ENCODE measurements at regions of chr19 and their contacts with region 1.

Region 1: DNA sequence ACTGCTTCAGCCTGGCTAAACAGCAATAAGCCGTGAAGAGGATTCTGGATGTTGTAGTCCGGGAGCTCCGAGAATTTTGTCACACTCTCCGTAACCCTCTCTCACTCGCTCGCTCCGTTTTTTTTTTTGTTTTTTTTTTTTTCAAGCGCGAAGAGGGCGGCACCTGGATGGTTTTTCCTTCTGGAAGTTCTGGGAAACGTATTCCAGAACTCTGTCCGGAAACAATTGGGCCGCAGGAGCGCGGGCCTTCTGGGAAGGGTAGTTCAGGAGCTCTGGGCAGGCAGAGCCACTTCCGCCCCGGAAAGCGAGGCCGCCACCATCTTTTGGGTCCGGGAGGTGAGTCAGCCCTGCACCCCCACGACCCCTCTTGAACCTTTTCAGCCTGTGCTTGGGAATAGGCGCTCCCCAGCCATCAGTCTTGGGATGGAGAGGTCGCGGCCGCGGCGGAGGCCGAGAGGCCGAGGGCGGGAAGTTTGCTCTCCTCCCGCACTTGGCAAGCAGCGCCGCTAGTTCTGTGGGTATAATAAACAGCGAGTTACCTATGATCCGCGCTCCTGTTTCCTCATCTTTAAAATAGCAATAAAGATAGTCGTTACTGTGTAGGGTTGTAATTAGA is at the start of gene ZNF227:
- DNase-seq: peak; percentile 64 to 75 (median 72)
- H3K4me3 ChIP-seq: peak within 1 kb of the TSS; percentile 86 to 96 (median 90)
- H3K4me3 Mint-ChIP-seq: peak within 1 kb of the TSS; percentile 94 to 95
- H3K27ac ChIP-seq: peak within 1 kb of the TSS; percentile 32 to 80
- H3K27ac Mint-ChIP-seq: peak within 1 kb of the TSS; percentile 76 to 97 (median 85)
- H3K4me1 ChIP-seq: peaks cover 15 to 18% of the 10 kb centered on the region in 2 donors
- H3K4me1 Mint-ChIP-seq: peaks cover 14% of the 10 kb centered on the region
- H3K27me3 ChIP-seq: peaks cover 0 to 2% of the 10 kb centered on the region in 2 donors
- H3K27me3 Mint-ChIP-seq: peaks cover 0 to 4% (median 0%) of the 10 kb centered on the region in 3 donors
- CTCF ChIP-seq: no peak
- polyA plus RNA-seq, gene ZNF227: 2.6 to 4.9 (median 3.8) TPM

Region 2: GRCh38 chr19:44002566-44003460 is 209.5 kb before region 1 on chr19 and contains the start of gene ZNF230:
- intact Hi-C with region 1: loop called in 1 of 2 experiments (anchors 5 kb)
- DNase-seq: peak; percentile 92 to 97 (median 95)
- H3K4me3 ChIP-seq: peak within 1 kb of the TSS; percentile 82 to 98 (median 92)
- H3K4me3 Mint-ChIP-seq: peak within 1 kb of the TSS; percentile 96 to 99
- H3K27ac ChIP-seq: peak within 1 kb of the TSS; percentile 83 to 86
- H3K27ac Mint-ChIP-seq: peak within 1 kb of the TSS; percentile 93 to 99 (median 96)
- H3K4me1 ChIP-seq: peaks cover 31 to 34% of the 10 kb centered on the region in 2 donors
- H3K4me1 Mint-ChIP-seq: peaks cover 31% of the 10 kb centered on the region
- H3K27me3 ChIP-seq: no peaks in the 10 kb centered on the region
- H3K27me3 Mint-ChIP-seq: peaks cover 0 to 4% (median 2%) of the 10 kb centered on the region in 3 donors
- CTCF ChIP-seq: no peak
- polyA plus RNA-seq, gene ZNF230: 1.0 to 3.9 (median 1.3) TPM

Region 3: GRCh38 chr19:44164673-44165512 is 47.5 kb before region 1 on chr19 and contains the start of gene ZNF226:
- intact Hi-C with region 1: loop called (anchors 5 kb)
- DNase-seq: peak; percentile 89 to 96 (median 95)
- H3K4me3 ChIP-seq: peak within 1 kb of the TSS; percentile 66 to 91 (median 68)
- H3K4me3 Mint-ChIP-seq: peak within 1 kb of the TSS; percentile 98 to 99
- H3K27ac ChIP-seq: peak within 1 kb of the TSS; percentile 58 to 86
- H3K27ac Mint-ChIP-seq: peak within 1 kb of the TSS; percentile 88 to 97 (median 96)
- H3K4me1 ChIP-seq: peaks cover 11 to 16% of the 10 kb centered on the region in 2 donors
- H3K4me1 Mint-ChIP-seq: peaks cover 18% of the 10 kb centered on the region
- H3K27me3 ChIP-seq: no peaks in the 10 kb centered on the region
- H3K27me3 Mint-ChIP-seq: peaks cover 1 to 10% (median 7%) of the 10 kb centered on the region in 3 donors
- CTCF ChIP-seq: no peak
- polyA plus RNA-seq, gene ZNF226: 9.3 to 16.6 (median 16.3) TPM

Region 4: GRCh38 chr19:44284968-44285367 is 72.6 kb after region 1 on chr19:
- intact Hi-C with region 1: no loop called
- DNase-seq: no peak
- H3K4me3 ChIP-seq: no peak overlapping the region
- H3K4me3 Mint-ChIP-seq: no peak overlapping the region
- H3K27ac ChIP-seq: no peak overlapping the region
- H3K27ac Mint-ChIP-seq: no peak overlapping the region
- H3K4me1 ChIP-seq: no peaks in the 10 kb centered on the region
- H3K4me1 Mint-ChIP-seq: no peaks in the 10 kb centered on the region
- H3K27me3 ChIP-seq: no peaks in the 10 kb centered on the region
- H3K27me3 Mint-ChIP-seq: peaks cover 0 to 3% (median 2%) of the 10 kb centered on the region in 3 donors
- CTCF ChIP-seq: no peak

Region 5: DNA sequence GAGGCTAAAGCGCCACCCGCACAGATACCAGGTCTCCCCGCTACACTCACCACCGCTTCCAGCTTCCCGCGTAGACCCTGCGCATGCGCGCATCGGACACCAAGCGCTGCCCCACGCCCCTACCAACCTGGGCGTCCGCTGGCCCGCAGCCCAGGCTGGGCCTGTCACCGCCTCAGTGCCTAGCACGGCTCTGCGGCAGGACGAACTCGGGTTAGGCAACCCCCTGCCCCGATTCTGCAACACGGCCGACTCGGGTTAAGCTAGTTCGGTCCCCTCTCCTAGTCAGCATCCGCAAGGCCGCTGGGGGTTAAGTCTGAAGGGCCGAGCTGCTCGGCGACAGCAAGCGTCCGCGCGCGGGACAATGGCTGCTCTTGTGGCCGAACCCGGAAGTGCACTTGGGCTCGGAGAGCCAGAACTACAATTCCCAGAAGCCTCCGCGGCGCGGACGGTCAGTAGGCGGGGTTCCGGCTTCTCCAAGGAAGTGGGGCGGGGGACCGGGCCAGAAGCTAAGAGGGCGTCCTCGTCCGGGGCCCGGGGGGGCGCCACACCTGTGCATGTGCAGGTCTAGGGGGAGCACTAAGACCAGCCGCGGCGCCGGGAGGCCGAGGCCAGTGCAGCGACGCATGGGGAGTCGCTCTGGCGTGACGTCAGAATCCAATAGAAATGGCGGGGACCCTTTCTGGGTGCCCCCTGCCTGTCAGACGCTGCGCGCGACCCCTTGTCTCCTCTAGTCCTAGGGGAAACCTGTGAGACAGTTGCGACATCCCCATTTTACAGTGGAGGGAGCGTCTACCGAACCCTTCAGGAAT is 288.0 kb after region 1 on chr19 and contains the start of gene ZNF180:
- intact Hi-C with region 1: loop called (anchors 5 to 10 kb)
- DNase-seq: peak; percentile 92 to 95 (median 94)
- H3K4me3 ChIP-seq: peak within 1 kb of the TSS; percentile 68 to 85 (median 70)
- H3K4me3 Mint-ChIP-seq: peak within 1 kb of the TSS; percentile 88 to 95
- H3K27ac ChIP-seq: peak within 1 kb of the TSS; percentile 69 to 87
- H3K27ac Mint-ChIP-seq: peak within 1 kb of the TSS; percentile 84 to 95 (median 91)
- H3K4me1 ChIP-seq: peaks cover 13 to 14% of the 10 kb centered on the region in 2 donors
- H3K4me1 Mint-ChIP-seq: peaks cover 23% of the 10 kb centered on the region
- H3K27me3 ChIP-seq: peaks cover 0 to 1% of the 10 kb centered on the region in 2 donors
- H3K27me3 Mint-ChIP-seq: peaks cover 14 to 23% (median 18%) of the 10 kb centered on the region in 3 donors
- CTCF ChIP-seq: peak; percentile 30
- polyA plus RNA-seq, gene ZNF180: 1.2 to 3.5 (median 2.7) TPM

Measured in CD14-positive monocyte (primary cell).